Vagina (tissue), 2 donors: ENCODE measurements at regions of chr18 and their contacts with region 1.

Region 1: DNA sequence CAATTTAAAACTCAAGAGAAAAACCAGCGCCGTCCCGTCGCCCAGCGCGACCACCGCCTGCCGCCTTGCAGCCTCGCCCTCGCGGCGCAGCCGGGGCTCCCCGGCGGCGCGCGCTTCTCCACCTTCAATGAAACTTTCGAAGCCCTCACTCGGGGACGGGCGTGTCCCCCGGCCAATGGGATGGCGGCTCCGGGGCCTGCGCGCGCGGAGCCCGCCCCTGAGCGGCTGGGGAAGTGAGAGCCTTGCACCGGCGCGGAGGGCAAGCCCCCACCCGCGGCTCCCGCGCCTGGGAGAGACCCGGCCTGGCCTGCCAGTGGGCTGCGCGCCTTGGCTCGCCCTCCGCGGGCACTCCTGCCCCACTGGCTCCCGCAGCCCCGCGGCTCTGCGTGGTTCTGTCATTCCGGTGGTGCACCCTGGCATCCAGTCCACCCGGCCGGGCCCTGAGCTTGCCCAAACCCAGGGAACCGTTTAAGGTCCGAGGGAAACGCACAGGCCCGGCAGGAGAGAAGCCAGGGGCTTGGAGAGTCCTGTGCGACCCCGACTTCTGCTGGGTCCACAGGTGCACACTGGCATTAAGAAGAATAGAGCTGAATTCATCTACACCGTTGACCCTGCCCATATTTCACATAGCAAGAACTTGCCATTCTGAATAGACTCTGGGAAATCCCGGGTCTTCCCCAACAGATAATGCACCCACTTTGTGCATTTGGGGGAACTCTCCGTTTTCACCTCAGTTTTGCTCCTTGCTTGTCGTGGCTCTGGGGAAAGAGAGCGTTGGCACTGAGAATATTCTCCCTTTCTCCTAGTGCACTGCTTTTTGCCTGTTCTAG is at the start of gene PIEZO2:
- DNase-seq: no peak
- H3K4me3 ChIP-seq: peak within 1 kb of the TSS; percentile 35 to 42
- H3K27ac ChIP-seq: no peak within 1 kb of the TSS
- H3K4me1 ChIP-seq: peaks cover 25% of the 10 kb centered on the region
- H3K27me3 ChIP-seq: peaks cover 9% of the 10 kb centered on the region
- CTCF ChIP-seq: no peak
- POLR2A ChIP-seq: peak in 1 of 2 donors; percentile 26
- total RNA-seq, gene PIEZO2: 5.9 TPM

Region 2: GRCh38 chr18:10560450-10561045 is 589.1 kb before region 1 on chr18:
- intact Hi-C with region 1: loop called (anchors 5 kb)
- DNase-seq: no peak
- H3K4me3 ChIP-seq: peak overlapping the region in 1 of 2 donors; percentile 32
- H3K27ac ChIP-seq: no peak overlapping the region
- H3K4me1 ChIP-seq: peaks cover 10% of the 10 kb centered on the region
- H3K27me3 ChIP-seq: no peaks in the 10 kb centered on the region
- CTCF ChIP-seq: peak in 2 of 3 experiments; percentile 50 to 53
- POLR2A ChIP-seq: no peak

Region 3: DNA sequence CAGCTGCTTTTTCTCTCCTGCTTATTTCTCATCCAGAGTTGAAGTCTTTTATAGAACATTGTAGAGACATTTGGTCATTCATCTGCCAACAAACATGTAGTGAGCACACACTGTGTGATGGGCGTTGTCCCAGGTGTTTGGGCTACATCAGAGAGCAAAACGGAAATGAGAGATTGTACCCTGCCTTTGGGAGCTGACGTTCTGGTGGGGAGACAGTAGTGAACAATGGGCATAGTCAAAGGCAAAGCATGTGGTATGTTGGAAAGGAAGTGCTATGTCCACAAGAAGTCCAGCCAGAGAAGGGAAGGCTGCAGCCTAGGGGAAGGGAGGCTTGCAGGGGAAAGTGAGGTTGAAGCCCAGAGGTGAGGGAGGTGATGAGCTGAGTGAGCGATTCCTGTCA is 78.4 kb before region 1 on chr18:
- intact Hi-C with region 1: no loop called
- DNase-seq: no peak
- H3K4me3 ChIP-seq: no peak overlapping the region
- H3K27ac ChIP-seq: no peak overlapping the region
- H3K4me1 ChIP-seq: no peaks in the 10 kb centered on the region
- H3K27me3 ChIP-seq: no peaks in the 10 kb centered on the region
- CTCF ChIP-seq: no peak
- POLR2A ChIP-seq: no peak